CD4-positive, alpha-beta memory T cell (primary cell): ENCODE measurements at regions of chr3 and their contacts with region 1.

Region 1: DNA sequence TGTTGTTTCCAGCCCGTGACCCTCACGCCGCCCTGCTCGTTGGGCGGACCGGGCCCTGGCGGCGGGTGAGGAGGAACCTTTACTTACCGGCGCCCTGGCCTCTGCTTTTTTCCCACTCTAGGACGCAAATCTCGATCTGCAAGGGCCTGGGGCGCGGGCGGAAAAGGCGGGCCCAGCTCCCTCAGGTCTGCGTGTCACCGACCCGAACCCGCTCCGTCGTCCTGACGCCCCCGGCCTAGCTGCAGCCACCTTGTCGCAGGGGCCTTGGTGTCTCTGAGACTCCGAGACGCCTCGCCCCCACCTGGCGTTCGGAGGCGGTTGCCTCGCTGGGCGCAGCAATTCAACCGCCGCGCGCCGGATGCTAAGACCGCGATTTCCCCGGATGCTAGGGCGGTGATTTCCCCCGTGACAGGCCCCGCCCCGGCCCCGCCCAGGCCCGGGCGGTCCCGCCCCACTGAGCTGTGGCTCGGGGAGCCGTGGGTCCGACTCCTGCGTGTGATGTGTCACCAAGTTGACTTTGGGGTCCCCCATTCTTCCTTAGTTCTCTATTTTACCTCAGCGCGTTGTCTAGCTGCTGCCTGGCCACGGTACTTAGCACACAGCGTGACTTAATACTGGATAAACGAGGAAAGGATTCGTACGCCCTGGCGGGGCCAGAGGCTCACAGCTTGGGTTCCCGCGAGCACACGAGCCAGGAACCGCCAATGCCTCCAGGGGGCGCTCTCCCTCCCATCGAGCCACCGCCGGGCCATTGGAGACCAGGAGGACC is at the start of gene RPL39L:
- DNase-seq: peak; percentile 91 to 93 (median 92)
- H3K4me3 ChIP-seq: peak within 1 kb of the TSS; percentile 24 to 86
- H3K4me3 Mint-ChIP-seq: peak within 1 kb of the TSS; percentile 82 to 94 (median 91)
- H3K27ac ChIP-seq: peak within 1 kb of the TSS; percentile 74
- H3K27ac Mint-ChIP-seq: peak within 1 kb of the TSS; percentile 87 to 97 (median 95)
- H3K4me1 ChIP-seq: peaks cover 17% of the 10 kb centered on the region
- H3K4me1 Mint-ChIP-seq: peaks cover 9 to 34% (median 18%) of the 10 kb centered on the region in 4 donors
- H3K27me3 ChIP-seq: no peaks in the 10 kb centered on the region
- H3K27me3 Mint-ChIP-seq: no peaks in the 10 kb centered on the region
- total RNA-seq, gene RPL39L: 2.6 to 3.6 TPM

Region 2: DNA sequence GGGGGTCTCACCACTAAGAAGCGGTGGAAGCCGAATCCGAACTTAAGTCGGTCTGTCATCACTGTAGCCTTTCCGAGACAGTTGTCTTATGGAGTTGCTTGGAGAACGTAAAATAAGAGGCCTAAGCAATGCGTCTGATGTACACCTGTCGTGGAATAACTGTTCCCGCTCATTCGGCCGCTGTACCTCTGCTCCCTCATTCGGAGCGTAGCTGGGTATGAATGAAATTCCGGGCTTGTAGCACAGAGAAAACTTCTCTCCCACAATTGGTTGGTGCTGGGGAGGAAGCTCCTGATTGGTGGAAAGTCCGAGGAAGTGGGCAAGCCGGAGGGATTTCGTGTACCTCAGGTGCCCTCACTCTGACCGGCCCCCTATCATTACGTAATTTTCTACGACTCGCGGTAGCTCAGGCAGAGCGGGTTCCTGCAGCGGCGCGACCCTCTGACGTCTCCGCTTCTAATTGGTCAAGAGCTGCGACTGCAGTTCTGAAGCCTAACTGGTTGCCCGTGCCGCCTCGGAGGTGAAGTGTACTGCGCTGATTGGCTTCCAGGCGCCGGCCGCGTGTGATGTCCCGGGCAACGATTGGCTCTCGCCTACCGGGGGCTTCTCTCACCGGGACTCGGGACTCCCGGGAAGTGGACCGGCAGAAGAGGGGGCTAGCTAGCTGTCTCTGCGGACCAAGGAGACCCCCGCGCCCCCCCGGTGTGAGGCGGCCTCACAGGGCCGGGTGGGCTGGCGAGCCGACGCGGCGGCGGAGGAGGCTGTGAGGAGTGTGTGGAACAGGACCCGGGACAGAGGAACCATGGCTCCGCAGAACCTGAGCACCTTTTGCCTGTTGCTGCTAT is 569.0 kb before region 1 on chr3 and contains the start of gene DNAJB11:
- CTCF ChIA-PET with region 1: interaction called, 6 read pairs
- POLR2A ChIA-PET with region 1: interaction called, 4 read pairs
- intact Hi-C with region 1: loop called (anchors 10 kb)
- DNase-seq: peak; percentile 96 to 100 (median 99)
- H3K4me3 ChIP-seq: peak within 1 kb of the TSS; percentile 71 to 93
- H3K4me3 Mint-ChIP-seq: peak within 1 kb of the TSS; percentile 89 to 100 (median 94)
- H3K27ac ChIP-seq: peak within 1 kb of the TSS; percentile 91
- H3K27ac Mint-ChIP-seq: peak within 1 kb of the TSS; percentile 95 to 99 (median 98)
- H3K4me1 ChIP-seq: peaks cover 37% of the 10 kb centered on the region
- H3K4me1 Mint-ChIP-seq: peaks cover 30 to 71% (median 45%) of the 10 kb centered on the region in 4 donors
- H3K27me3 ChIP-seq: no peaks in the 10 kb centered on the region
- H3K27me3 Mint-ChIP-seq: no peaks in the 10 kb centered on the region
- total RNA-seq, gene DNAJB11: 34.0 to 38.6 TPM

Region 3: GRCh38 chr3:187025656-187026316 is 113.5 kb before region 1 on chr3:
- CTCF ChIA-PET with region 1: interaction called, 11 read pairs
- POLR2A ChIA-PET with region 1: interaction called, 27 read pairs
- intact Hi-C with region 1: no loop called
- DNase-seq: peak in 3 of 5 donors; percentile 18 to 49 (median 35)
- H3K4me3 ChIP-seq: peak overlapping the region; percentile 57 to 89
- H3K4me3 Mint-ChIP-seq: peak overlapping the region; percentile 81 to 97 (median 92)
- H3K27ac ChIP-seq: peak overlapping the region; percentile 68
- H3K27ac Mint-ChIP-seq: peak overlapping the region; percentile 86 to 98 (median 92)
- H3K4me1 ChIP-seq: peaks cover 82% of the 10 kb centered on the region
- H3K4me1 Mint-ChIP-seq: peaks cover 48 to 80% (median 62%) of the 10 kb centered on the region in 4 donors
- H3K27me3 ChIP-seq: no peaks in the 10 kb centered on the region
- H3K27me3 Mint-ChIP-seq: no peaks in the 10 kb centered on the region

Region 4: GRCh38 chr3:187051719-187052366 is 87.5 kb before region 1 on chr3:
- CTCF ChIA-PET with region 1: no interaction called
- POLR2A ChIA-PET with region 1: no interaction called
- intact Hi-C with region 1: no loop called
- DNase-seq: no peak
- H3K4me3 ChIP-seq: no peak overlapping the region
- H3K4me3 Mint-ChIP-seq: no peak overlapping the region
- H3K27ac ChIP-seq: no peak overlapping the region
- H3K27ac Mint-ChIP-seq: peak overlapping the region in 5 of 7 donors; percentile 2 to 84 (median 69)
- H3K4me1 ChIP-seq: peaks cover 35% of the 10 kb centered on the region
- H3K4me1 Mint-ChIP-seq: peaks cover 34 to 88% (median 60%) of the 10 kb centered on the region in 4 donors
- H3K27me3 ChIP-seq: no peaks in the 10 kb centered on the region
- H3K27me3 Mint-ChIP-seq: no peaks in the 10 kb centered on the region

Region 5: DNA sequence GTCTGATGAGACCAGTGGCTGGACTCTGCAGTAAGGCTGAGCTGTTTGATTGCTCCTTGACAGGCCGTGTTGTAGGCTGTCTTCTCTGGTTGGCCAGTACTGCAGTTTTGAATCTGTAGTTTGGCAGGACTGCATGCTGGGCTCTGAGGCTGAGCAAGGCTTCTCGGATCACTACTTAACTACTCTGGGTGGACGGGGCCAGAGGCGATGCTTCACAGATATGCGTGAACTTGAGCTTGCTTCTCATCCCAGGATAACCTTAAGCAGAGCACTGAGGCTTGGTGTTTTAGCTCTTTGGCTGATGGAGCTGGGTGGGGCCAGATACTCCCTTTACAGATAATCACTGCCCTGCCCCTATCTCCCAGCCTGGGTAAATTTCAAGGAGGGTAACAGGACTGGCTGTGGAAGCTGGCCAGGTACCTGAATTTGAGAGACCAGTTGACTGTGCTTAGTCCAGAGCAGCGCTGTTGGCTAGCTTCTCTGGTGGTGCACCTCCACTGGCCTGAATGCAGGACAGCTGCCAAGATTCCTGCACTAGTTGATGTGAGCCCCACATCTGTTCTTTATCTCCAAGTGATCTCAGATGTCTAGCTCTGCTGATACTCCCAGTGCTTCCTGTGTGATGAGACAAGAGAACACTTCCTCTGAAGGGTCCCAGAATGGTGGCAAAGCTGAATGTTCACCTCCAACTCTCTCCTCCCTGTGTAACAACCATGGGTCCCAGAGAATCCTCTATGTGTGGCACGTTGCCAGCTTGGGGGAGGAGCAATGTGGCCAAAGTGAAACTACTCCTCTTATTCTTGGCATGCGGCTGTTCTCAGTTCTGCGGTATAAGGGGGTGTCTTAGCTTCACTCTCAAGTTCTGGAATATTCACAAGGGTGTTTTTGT is 37.9 kb before region 1 on chr3:
- CTCF ChIA-PET with region 1: interaction called, 18 read pairs
- POLR2A ChIA-PET with region 1: interaction called, 7 read pairs
- intact Hi-C with region 1: no loop called
- DNase-seq: peak; percentile 43 to 57 (median 48)
- H3K4me3 ChIP-seq: peak overlapping the region; percentile 17 to 27
- H3K4me3 Mint-ChIP-seq: peak overlapping the region; percentile 70 to 91 (median 84)
- H3K27ac ChIP-seq: peak overlapping the region; percentile 18
- H3K27ac Mint-ChIP-seq: peak overlapping the region; percentile 4 to 93 (median 88)
- H3K4me1 ChIP-seq: peaks cover 23% of the 10 kb centered on the region
- H3K4me1 Mint-ChIP-seq: peaks cover 26 to 35% (median 28%) of the 10 kb centered on the region in 4 donors
- H3K27me3 ChIP-seq: no peaks in the 10 kb centered on the region
- H3K27me3 Mint-ChIP-seq: no peaks in the 10 kb centered on the region

Region 6: DNA sequence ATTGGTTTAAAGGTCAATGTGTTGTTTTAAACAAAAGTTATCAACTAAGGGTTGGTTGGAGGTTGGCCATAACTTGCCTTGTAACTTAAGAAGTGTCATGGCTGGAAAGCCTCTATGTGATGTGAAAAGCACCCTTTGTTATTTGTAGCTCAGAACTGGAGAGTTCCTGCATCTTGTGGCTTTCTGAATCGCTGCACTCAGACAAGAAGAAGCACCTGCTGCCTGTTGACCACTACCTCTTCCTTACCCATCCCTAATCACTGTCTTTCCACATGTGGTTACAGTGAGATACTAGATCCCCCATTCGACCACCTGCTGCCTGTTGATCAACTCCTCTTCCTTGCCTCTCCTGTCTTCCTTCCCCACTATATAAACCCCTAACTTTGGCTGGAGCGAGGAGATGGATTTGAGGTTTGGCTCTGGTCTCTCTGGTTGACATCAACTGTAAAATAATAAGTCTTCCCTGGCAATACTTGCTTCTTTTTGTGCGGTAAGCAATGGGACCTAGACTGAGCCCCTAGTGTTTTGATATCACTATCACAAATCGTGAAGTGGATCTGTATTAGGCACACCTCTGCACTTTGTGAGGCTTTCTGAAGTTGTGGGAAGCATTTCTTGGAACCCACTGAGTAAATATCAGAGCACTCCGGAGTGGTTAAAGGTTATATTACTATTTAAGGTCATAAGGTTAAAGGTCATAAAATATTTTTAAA is 13.8 kb before region 1 on chr3:
- CTCF ChIA-PET with region 1: interaction called, 94 read pairs
- POLR2A ChIA-PET with region 1: interaction called, 61 read pairs
- intact Hi-C with region 1: loop called (anchors 1 kb)
- DNase-seq: no peak
- H3K4me3 ChIP-seq: no peak overlapping the region
- H3K4me3 Mint-ChIP-seq: no peak overlapping the region
- H3K27ac ChIP-seq: no peak overlapping the region
- H3K27ac Mint-ChIP-seq: no peak overlapping the region
- H3K4me1 ChIP-seq: peaks cover 11% of the 10 kb centered on the region
- H3K4me1 Mint-ChIP-seq: peaks cover 10 to 21% (median 16%) of the 10 kb centered on the region in 4 donors
- H3K27me3 ChIP-seq: no peaks in the 10 kb centered on the region
- H3K27me3 Mint-ChIP-seq: no peaks in the 10 kb centered on the region

Region 7: GRCh38 chr3:187164885-187165543 is 25.7 kb after region 1 on chr3:
- CTCF ChIA-PET with region 1: interaction called, 47 read pairs
- POLR2A ChIA-PET with region 1: interaction called, 8 read pairs
- intact Hi-C with region 1: loop called (anchors 1 kb)
- DNase-seq: peak; percentile 66 to 73 (median 70)
- H3K4me3 ChIP-seq: no peak overlapping the region
- H3K4me3 Mint-ChIP-seq: no peak overlapping the region
- H3K27ac ChIP-seq: no peak overlapping the region
- H3K27ac Mint-ChIP-seq: no peak overlapping the region
- H3K4me1 ChIP-seq: peaks cover 2% of the 10 kb centered on the region
- H3K4me1 Mint-ChIP-seq: peaks cover 0 to 8% (median 4%) of the 10 kb centered on the region in 4 donors
- H3K27me3 ChIP-seq: no peaks in the 10 kb centered on the region
- H3K27me3 Mint-ChIP-seq: peaks cover 6 to 7% of the 10 kb centered on the region in 2 donors

Region 8: DNA sequence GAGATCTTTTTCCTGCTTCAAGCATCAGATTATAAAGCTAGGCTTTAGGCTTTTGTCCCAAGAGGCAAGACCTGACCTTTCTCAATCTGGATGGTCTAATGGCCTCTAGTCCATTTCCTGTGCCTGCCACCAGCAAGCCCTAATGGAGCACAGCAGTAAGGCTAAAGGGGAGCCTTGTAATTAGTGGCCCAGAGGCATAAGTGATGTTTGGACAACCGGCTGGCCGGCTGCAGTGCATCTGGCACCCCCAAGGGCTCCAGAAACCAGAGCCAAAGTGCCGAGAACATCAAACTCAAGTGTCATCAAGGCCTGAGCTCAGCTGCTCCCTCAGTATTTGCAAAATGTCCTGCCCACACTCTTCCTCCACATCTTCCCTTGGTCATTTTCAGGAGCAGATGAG is 197.0 kb after region 1 on chr3:
- CTCF ChIA-PET with region 1: no interaction called
- POLR2A ChIA-PET with region 1: no interaction called
- intact Hi-C with region 1: no loop called
- DNase-seq: no peak
- H3K4me3 ChIP-seq: no peak overlapping the region
- H3K4me3 Mint-ChIP-seq: no peak overlapping the region
- H3K27ac ChIP-seq: no peak overlapping the region
- H3K27ac Mint-ChIP-seq: no peak overlapping the region
- H3K4me1 ChIP-seq: no peaks in the 10 kb centered on the region
- H3K4me1 Mint-ChIP-seq: no peaks in the 10 kb centered on the region
- H3K27me3 ChIP-seq: no peaks in the 10 kb centered on the region
- H3K27me3 Mint-ChIP-seq: peaks cover 14 to 22% of the 10 kb centered on the region in 2 donors